Esophagus muscularis mucosa (tissue), 4 donors: ENCODE measurements at regions of chr17 and their contacts with region 1.

Region 1: DNA sequence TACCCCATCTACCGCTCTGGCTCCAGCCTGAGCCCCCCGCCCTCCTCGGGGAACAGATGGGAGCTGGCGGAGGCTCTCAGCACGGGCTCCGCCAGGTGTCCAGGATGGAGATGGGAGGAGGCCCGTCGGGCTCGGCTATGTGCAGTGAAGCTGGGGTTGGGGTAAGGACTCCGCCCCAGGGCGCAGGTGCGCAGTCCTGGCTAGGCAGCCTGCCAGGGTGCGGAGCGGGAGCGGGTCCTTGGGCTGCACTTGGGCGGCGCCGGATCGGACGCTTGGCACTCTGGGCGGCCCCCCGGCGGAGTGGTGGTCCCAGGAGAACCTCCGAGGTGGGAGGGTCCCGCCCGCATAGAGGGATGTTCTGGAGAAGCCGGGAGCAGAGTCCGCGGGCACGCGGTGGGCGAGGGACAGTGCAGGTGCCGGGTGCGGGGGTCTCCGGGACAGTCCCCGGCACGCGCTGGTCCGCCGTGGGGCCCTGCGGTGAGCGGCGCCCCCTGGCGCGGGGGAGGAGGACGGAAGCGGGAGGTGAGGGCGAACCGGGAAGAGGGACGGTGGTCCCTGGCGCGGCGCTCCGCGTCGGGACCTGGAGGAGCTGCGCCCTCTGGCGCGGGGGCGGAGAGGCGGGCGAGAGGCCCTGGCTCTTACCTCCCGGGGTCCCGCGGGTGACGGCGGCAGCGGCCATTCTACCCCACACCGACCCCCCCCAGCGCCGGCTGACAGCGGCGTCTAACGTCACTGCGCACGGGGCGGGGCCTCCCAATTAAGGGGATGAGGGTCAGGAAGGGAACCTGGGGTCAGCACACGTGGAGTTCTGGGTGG is at the start of gene CAMTA2:
- DNase-seq: peak; percentile 97
- H3K4me3 ChIP-seq: peak within 1 kb of the TSS; percentile 80 to 96 (median 84)
- H3K27ac ChIP-seq: peak within 1 kb of the TSS; percentile 90 to 98 (median 92)
- H3K4me1 ChIP-seq: peaks cover 22 to 34% (median 32%) of the 10 kb centered on the region in 4 donors
- H3K27me3 ChIP-seq: no peaks in the 10 kb centered on the region
- CTCF ChIP-seq: peak; percentile 78 to 88 (median 83)
- EP300 ChIP-seq: no peak
- POLR2A ChIP-seq: peak; percentile 80
- total RNA-seq, gene CAMTA2: 24.0 to 48.2 (median 28.4) TPM

Region 2: DNA sequence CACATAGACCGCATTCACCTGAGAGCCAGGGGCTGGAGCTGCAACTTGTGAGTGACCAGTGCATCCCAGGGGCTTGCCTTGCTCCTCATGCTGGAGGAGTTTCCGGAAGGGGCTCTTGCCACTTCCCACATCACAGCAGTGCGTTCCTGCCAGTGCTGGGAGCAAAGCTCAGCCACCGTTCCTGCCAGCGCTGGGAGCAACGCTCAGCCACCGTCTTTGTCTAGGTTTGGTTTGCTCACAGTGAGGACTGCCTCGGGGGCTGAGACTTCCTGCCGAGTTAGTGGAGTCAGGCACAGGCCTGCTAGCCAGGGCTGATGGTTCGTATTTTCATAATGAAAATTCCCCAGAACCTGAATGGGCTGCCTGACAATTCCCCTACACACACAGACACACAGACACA is 78.9 kb before region 1 on chr17:
- intact Hi-C with region 1: loop called (anchors 5 kb)
- DNase-seq: no peak
- H3K4me3 ChIP-seq: no peak overlapping the region
- H3K27ac ChIP-seq: peak overlapping the region in 2 of 4 donors; percentile 62
- H3K4me1 ChIP-seq: peaks cover 5 to 19% (median 12%) of the 10 kb centered on the region in 4 donors
- H3K27me3 ChIP-seq: peaks cover 0 to 19% (median 3%) of the 10 kb centered on the region in 4 donors
- CTCF ChIP-seq: no peak
- EP300 ChIP-seq: no peak
- POLR2A ChIP-seq: no peak

Region 3: DNA sequence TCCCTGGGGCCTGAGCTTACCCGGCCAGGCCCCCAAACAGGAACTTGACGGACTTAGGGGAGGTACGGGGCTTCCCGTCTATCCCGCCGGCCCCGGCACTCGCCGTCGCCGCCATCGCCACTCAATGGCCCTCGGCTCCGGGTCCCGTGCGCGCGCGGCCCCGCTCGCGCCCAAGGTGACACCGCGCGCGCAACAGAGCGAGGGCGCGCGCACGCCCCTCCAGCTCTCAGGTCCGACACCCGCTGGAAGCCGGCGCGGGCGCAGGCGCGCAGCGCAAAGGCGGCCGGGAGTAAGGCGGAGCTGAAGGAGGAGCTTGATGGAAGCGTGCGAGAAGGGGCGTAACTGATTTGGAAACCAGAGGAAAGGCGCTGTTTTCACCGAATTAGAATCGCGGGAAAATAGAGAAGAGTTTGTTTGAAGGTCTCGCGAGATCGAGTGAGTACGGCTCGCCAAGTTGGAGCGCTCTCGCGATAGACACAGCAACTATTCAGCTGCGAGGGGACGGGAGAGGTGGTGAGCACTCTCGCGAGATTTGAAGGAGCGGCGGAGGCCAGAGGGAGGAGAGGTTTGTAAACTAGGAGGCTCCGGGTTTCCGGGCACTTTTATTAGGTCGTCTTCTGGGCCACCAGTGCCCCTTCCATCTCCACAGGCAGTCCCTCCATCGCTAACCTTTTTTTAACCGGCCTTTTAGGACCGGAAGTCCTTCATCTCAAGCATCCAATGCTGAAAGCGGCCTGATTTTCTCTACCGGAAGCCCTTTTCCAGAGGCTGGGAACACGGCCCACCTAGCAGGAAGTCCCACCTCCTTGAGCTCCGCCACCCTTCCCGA is 47.1 kb before region 1 on chr17 and contains the starts of genes RNF167 and SLC25A11:
- intact Hi-C with region 1: loop called (anchors 5 kb)
- DNase-seq: peak; percentile 99
- H3K4me3 ChIP-seq: peak within 1 kb of the TSS; percentile 77 to 87 (median 78)
- H3K27ac ChIP-seq: peak within 1 kb of the TSS; percentile 91 to 97 (median 94)
- H3K4me1 ChIP-seq: peaks cover 37 to 69% (median 63%) of the 10 kb centered on the region in 4 donors
- H3K27me3 ChIP-seq: no peaks in the 10 kb centered on the region
- CTCF ChIP-seq: peak in 1 of 3 experiments; percentile 33
- EP300 ChIP-seq: no peak
- POLR2A ChIP-seq: peak; percentile 56
- total RNA-seq, gene RNF167: 59.8 to 96.3 (median 69.5) TPM
- total RNA-seq, gene SLC25A11: 38.8 to 73.4 (median 55.5) TPM

Region 4: GRCh38 chr17:4950075-4950745 is 36.9 kb before region 1 on chr17:
- intact Hi-C with region 1: no loop called
- DNase-seq: no peak
- H3K4me3 ChIP-seq: peak overlapping the region; percentile 87 to 100 (median 100)
- H3K27ac ChIP-seq: peak overlapping the region; percentile 94 to 100 (median 98)
- H3K4me1 ChIP-seq: peaks cover 36 to 54% (median 49%) of the 10 kb centered on the region in 4 donors
- H3K27me3 ChIP-seq: no peaks in the 10 kb centered on the region
- CTCF ChIP-seq: no peak
- EP300 ChIP-seq: no peak
- POLR2A ChIP-seq: no peak